ENCODE measurements at regions of chr10 and their contacts with region 1.

Region 1: DNA sequence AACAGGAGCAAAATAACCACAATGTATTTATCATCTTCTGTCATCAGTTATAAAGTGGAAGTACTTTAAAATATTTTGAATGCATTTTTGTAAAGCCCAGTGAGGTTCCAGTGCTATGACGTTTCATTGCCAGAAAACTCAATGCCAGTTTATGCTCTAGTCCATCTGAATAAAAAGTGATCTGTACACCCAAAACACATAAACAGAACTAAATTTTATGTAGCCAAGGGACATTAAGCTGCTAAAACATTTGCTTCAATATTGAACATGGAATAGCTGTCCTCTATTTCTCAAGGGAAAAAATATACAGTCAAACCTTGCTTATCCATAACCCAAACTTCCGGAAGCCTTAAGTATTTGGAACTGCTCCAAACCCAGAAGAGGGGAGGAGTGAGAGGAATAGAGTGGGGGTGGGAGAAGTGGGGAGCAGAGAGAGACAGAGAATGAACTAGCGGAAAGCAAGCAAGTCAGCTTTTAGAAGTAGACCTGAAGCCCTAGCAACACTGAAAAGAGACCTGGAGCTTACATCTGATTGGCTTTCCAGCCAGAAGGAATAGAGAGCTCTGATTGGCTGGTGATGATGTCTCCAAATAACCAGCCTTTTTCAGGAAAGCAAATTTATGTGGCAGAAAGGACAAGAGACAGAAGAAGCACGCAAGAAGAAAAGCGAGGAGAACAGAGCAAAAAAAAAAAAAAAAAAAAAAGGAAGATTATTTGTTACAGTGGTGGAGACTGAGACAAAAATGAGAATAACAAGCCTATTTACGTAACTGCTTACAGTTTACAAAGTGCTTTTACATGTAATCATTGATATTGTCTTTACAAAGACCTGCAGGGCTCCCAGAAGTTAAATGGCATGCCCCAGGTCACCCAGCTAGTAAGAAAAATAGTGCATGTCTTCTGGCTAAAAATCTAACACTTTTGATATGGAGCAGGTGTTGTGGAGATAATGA is 196.0 kb downstream of the RNLS start:
- DNase-seq: peak in 3 of 5 donors; percentile 4 to 31 (median 13)
- H3K4me3 ChIP-seq: peak overlapping the region in 1 of 2 donors; percentile 42
- H3K4me3 Mint-ChIP-seq: peak overlapping the region in 1 of 8 donors; percentile 6
- H3K27ac ChIP-seq: peak overlapping the region; percentile 80
- H3K27ac Mint-ChIP-seq: no peak overlapping the region
- H3K4me1 ChIP-seq: peaks cover 77% of the 10 kb centered on the region
- H3K4me1 Mint-ChIP-seq: peaks cover 16 to 25% (median 21%) of the 10 kb centered on the region in 4 donors
- H3K27me3 ChIP-seq: no peaks in the 10 kb centered on the region
- H3K27me3 Mint-ChIP-seq: no peaks in the 10 kb centered on the region

Region 2: DNA sequence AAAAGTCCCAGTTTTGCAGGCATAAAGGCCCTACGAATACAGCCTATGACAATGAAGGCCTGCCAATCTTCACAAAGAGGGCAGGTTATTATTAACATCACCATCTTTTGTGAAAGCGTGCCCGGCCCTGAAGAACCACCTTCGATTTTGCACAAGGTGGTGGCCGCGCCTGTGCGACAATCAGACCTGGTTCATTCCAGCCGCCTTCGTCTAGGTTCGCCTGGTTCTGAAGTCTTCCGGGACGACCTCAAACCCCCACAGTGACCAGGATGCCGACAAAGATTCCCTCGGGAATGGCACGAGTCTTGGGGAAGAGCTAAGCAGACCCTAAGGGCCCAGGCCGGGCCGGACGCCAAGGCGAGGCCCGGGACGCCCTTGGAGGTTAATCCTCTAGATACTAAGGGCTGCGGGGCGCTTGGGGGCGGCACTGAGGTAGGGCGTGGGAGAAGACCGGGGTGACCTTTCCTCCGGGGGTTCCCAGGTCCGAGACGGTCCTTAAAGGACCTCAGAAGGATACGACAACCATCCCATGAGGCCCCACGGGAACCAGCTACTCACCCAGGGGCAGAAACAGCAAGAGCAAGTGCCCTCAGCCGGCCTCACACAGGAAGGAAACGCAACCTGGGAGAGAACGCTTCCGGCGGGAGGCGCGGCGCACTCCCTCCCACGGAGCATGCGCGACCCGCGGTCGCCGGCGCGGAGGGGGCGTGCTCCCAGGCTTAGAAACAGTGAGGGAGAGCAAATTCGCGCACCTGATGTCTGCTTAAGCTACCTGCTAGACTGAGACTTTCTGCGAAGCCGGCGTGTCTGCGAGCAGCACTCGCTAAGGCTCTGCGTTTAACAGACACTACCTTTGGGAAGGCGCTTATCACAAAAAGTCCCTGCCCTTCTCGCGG is 569.2 kb before region 1 on chr10 and contains the start of gene ATAD1:
- CTCF ChIA-PET with region 1: interaction called, 13 read pairs
- POLR2A ChIA-PET with region 1: interaction called, 12 read pairs
- intact Hi-C with region 1: loop called (anchors 1 kb)
- DNase-seq: peak; percentile 89 to 91 (median 91)
- H3K4me3 ChIP-seq: peak within 1 kb of the TSS; percentile 85 to 95
- H3K4me3 Mint-ChIP-seq: peak within 1 kb of the TSS; percentile 88 to 98 (median 94)
- H3K27ac ChIP-seq: peak within 1 kb of the TSS; percentile 94
- H3K27ac Mint-ChIP-seq: peak within 1 kb of the TSS; percentile 94 to 99 (median 98)
- H3K4me1 ChIP-seq: peaks cover 46% of the 10 kb centered on the region
- H3K4me1 Mint-ChIP-seq: peaks cover 27 to 43% (median 35%) of the 10 kb centered on the region in 4 donors
- H3K27me3 ChIP-seq: no peaks in the 10 kb centered on the region
- H3K27me3 Mint-ChIP-seq: no peaks in the 10 kb centered on the region
- total RNA-seq, gene ATAD1: 46.5 to 52.0 TPM

Region 3: DNA sequence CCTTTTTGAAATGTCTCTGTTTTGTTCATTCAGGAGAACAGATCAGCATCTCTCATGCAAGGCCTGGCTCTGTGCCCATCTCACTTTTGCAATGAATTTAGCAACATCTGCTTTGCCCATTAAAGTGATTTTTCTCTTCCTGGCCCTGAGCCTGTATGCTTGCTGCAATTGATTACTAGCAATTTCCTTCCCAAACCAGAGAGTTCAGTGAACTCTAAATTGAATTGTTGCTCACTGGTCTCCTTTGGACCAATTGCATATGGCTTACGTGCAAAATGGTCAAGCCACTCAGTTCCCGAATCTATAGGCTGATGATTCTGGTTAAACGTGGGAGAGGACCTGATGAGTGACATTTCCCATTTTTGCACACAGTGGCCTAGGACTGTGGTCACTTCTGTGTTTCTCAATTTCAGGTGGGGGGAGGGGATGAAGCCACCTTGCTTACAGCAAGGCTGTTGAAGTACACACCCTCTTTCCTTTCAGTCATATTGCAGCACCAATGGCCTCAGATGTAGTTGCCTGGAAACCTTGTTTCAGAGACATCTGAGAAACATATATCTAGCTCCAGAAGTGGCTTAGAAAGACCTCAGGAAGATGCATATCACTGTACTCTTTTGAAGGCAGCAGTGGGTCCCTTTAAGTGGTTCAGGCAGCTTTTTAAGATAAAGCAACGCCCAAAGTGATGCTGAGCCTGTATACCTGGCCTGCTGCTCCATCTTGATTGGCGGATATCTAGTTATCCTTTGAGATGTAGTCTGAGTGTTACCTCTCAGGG is 322.3 kb before region 1 on chr10:
- CTCF ChIA-PET with region 1: interaction called, 3 read pairs
- POLR2A ChIA-PET with region 1: interaction called, 3 read pairs
- intact Hi-C with region 1: loop called (anchors 5 kb)
- DNase-seq: peak; percentile 47 to 81 (median 76)
- H3K4me3 ChIP-seq: no peak overlapping the region
- H3K4me3 Mint-ChIP-seq: peak overlapping the region in 7 of 8 donors; percentile 32 to 81 (median 59)
- H3K27ac ChIP-seq: no peak overlapping the region
- H3K27ac Mint-ChIP-seq: peak overlapping the region; percentile 84 to 97 (median 95)
- H3K4me1 ChIP-seq: peaks cover 43% of the 10 kb centered on the region
- H3K4me1 Mint-ChIP-seq: peaks cover 45 to 72% (median 50%) of the 10 kb centered on the region in 4 donors
- H3K27me3 ChIP-seq: no peaks in the 10 kb centered on the region
- H3K27me3 Mint-ChIP-seq: no peaks in the 10 kb centered on the region

Region 4: DNA sequence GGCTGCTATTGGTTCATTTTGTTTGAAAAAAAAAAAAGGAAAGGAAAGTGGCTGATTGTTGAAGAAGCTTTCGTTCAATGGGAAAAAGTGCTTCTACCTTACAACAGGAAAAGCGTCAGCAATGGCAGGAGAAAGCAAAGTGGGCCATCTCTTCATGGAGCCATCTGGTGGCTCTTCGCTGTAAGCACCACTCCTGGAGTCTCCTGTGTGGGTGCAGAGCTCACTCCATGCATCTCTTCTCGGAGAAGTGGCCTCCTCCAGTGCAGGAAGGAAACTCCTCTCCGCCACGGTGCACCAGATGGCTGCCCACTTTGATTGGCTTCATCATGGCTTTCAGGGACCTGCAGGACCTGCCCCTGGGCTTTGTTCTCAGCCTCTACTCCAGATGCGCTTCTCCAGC is 272.7 kb before region 1 on chr10:
- CTCF ChIA-PET with region 1: interaction called, 94 read pairs
- POLR2A ChIA-PET with region 1: interaction called, 7 read pairs
- intact Hi-C with region 1: loop called (anchors 1 kb)
- DNase-seq: peak in 2 of 5 donors; percentile 13 to 18
- H3K4me3 ChIP-seq: no peak overlapping the region
- H3K4me3 Mint-ChIP-seq: no peak overlapping the region
- H3K27ac ChIP-seq: no peak overlapping the region
- H3K27ac Mint-ChIP-seq: peak overlapping the region in 2 of 7 donors; percentile 4 to 13
- H3K4me1 ChIP-seq: peaks cover 32% of the 10 kb centered on the region
- H3K4me1 Mint-ChIP-seq: peaks cover 7 to 17% (median 10%) of the 10 kb centered on the region in 4 donors
- H3K27me3 ChIP-seq: no peaks in the 10 kb centered on the region
- H3K27me3 Mint-ChIP-seq: peaks cover 0 to 1% of the 10 kb centered on the region in 2 donors

Region 5: DNA sequence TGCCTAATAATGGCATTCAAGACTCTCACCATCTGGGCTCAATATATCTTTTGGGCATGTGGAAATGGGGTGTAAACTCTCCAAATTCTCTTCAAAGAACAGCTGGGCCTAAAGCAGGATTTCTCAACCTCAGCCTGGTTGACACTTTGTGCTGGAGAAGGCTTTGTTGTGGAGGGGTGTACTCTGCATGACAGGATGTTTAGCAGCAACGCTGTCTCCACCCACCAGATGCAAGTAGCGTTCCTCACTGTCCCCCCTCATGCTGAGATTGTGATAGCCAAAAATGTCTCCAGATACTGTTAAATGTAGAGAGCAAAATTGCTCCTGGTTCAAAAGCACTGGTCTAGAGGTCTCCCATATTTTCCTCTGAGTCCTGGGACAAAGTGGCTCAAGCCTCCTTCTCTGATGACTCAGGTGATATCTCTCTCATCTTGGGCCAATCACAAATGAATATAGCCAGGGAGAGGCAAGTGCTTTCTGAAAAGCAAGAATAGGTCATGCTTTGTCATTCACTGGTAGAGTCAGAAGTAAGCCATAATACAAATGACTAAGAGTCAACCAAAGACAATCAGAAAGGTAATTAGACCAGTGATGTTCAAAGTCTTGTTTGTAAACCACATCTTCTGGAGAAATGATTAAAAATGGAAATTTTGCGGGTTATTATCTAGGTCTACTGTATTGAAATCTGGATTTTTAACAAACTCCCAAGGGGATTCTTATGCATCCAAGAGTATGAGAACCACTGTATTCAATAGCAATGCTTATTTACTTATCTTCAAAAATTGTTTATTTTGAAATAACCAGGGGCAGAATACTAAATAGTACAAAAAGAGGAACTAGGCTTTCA is 192.8 kb before region 1 on chr10:
- CTCF ChIA-PET with region 1: interaction called, 14 read pairs
- POLR2A ChIA-PET with region 1: interaction called, 15 read pairs
- intact Hi-C with region 1: loop called (anchors 1 kb)
- DNase-seq: peak; percentile 64 to 80 (median 77)
- H3K4me3 ChIP-seq: peak overlapping the region in 1 of 2 donors; percentile 8
- H3K4me3 Mint-ChIP-seq: peak overlapping the region; percentile 8 to 84 (median 78)
- H3K27ac ChIP-seq: no peak overlapping the region
- H3K27ac Mint-ChIP-seq: peak overlapping the region; percentile 76 to 95 (median 89)
- H3K4me1 ChIP-seq: peaks cover 40% of the 10 kb centered on the region
- H3K4me1 Mint-ChIP-seq: peaks cover 32 to 54% (median 43%) of the 10 kb centered on the region in 4 donors
- H3K27me3 ChIP-seq: no peaks in the 10 kb centered on the region
- H3K27me3 Mint-ChIP-seq: no peaks in the 10 kb centered on the region

Region 6: GRCh38 chr10:88372051-88372715 is 14.9 kb before region 1 on chr10:
- CTCF ChIA-PET with region 1: interaction called, 21 read pairs
- POLR2A ChIA-PET with region 1: interaction called, 4 read pairs
- intact Hi-C with region 1: loop called (anchors 2 kb)
- DNase-seq: no peak
- H3K4me3 ChIP-seq: no peak overlapping the region
- H3K4me3 Mint-ChIP-seq: no peak overlapping the region
- H3K27ac ChIP-seq: no peak overlapping the region
- H3K27ac Mint-ChIP-seq: no peak overlapping the region
- H3K4me1 ChIP-seq: no peaks in the 10 kb centered on the region
- H3K4me1 Mint-ChIP-seq: peaks cover 0 to 12% (median 6%) of the 10 kb centered on the region in 4 donors
- H3K27me3 ChIP-seq: no peaks in the 10 kb centered on the region
- H3K27me3 Mint-ChIP-seq: no peaks in the 10 kb centered on the region

Measured in CD4-positive, alpha-beta memory T cell (primary cell).